Posterior cingulate gyrus (tissue), 11 donors: ENCODE measurements at regions of chr15 and their contacts with region 1.

Region 1: GRCh38 chr15:69893863-69894262 is 203.9 kb downstream of the TLE3 start:
- DNase-seq: peak in 9 of 10 donors; percentile 37 to 94 (median 65)

Region 2: DNA sequence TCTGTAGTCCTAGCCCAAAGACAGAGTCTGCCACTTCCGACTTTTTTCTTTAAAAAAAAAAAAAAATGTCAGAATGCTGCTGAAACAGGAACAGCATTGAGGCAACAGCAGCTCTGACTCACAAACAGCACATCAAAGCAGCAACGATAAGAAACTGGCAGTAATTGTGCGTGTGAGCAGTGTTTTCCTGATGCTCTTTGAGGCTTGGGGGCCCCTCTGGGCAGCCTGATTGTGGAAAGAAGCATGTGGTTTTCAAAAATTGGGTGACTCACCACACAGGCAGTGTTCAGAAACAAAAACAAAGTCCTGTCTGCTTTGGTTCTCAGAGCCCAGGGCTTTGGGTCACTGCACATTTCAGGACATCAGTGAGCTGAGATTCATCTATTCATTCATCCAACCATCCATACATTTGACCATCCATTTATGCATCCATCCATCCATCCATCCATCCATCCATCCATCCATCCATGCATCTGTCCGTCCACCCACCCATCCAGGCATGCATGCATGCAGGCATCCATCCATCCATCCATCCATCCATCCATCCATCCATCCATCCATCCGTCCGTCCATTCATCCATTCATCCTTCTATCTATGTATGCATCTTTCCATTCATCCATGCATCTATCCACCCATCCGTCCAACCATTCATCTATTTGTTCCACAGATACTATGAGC is 132.8 kb before region 1 on chr15:
- intact Hi-C with region 1: no loop called
- DNase-seq: peak in 2 of 10 donors; percentile 23 to 63

Region 3: GRCh38 chr15:69931156-69931555 is 37.3 kb after region 1 on chr15:
- intact Hi-C with region 1: loop called (anchors 2 kb)
- DNase-seq: no peak

Region 4: GRCh38 chr15:70111203-70112073 is 217.6 kb after region 1 on chr15:
- intact Hi-C with region 1: loop called (anchors 2 kb)
- DNase-seq: peak in 9 of 10 donors; percentile 51 to 93 (median 70)

Region 5: GRCh38 chr15:70299931-70300869 is 406.3 kb after region 1 on chr15:
- intact Hi-C with region 1: no loop called
- DNase-seq: no peak